K562 (cell line): ENCODE measurements at regions of chr12 and their contacts with region 1.

Region 1: GRCh38 chr12:125402874-125403789 is 337.9 kb downstream of the AACS start:
- DNase-seq: peak; percentile 30 to 58 (median 50)
- ATAC-seq: peak; percentile 86
- H3K4me3 ChIP-seq: no peak overlapping the region
- H3K27ac ChIP-seq: no peak overlapping the region
- H3K4me1 ChIP-seq: no peaks in the 10 kb centered on the region
- H3K27me3 ChIP-seq: no peaks in the 10 kb centered on the region
- CTCF ChIP-seq: peak; percentile 60 to 79 (median 65)
- EP300 ChIP-seq: no peak
- POLR2A ChIP-seq: no peak
- RAD21 ChIP-seq: peak; percentile 52 to 81

Region 2: GRCh38 chr12:125183187-125184067 is 219.7 kb before region 1 on chr12:
- CTCF ChIA-PET with region 1: interaction called, 10 read pairs
- POLR2A ChIA-PET with region 1: no interaction called
- in situ Hi-C with region 1: no loop called
- intact Hi-C with region 1: loop called (anchors 1 kb)
- DNase-seq: peak; percentile 85 to 92 (median 90)
- ATAC-seq: peak; percentile 85
- H3K4me3 ChIP-seq: no peak overlapping the region
- H3K27ac ChIP-seq: no peak overlapping the region
- H3K4me1 ChIP-seq: peaks cover 0 to 24% of the 10 kb centered on the region in 2 experiments; a peak in 3 of 5 replicates
- H3K27me3 ChIP-seq: peaks cover 11 to 41% of the 10 kb centered on the region in 2 experiments; a peak in 4 of 5 replicates
- CTCF ChIP-seq: peak; percentile 95 to 97 (median 96)
- EP300 ChIP-seq: no peak
- POLR2A ChIP-seq: no peak
- RAD21 ChIP-seq: peak; percentile 79 to 95

Region 3: GRCh38 chr12:125240717-125241116 is 162.4 kb before region 1 on chr12:
- CTCF ChIA-PET with region 1: interaction called, 6 read pairs
- POLR2A ChIA-PET with region 1: no interaction called
- in situ Hi-C with region 1: no loop called
- intact Hi-C with region 1: loop called (anchors 1 kb)
- DNase-seq: no peak
- ATAC-seq: no peak
- H3K4me3 ChIP-seq: no peak overlapping the region
- H3K27ac ChIP-seq: no peak overlapping the region
- H3K4me1 ChIP-seq: no peaks in the 10 kb centered on the region
- H3K27me3 ChIP-seq: peaks cover 9 to 44% of the 10 kb centered on the region in 2 experiments; a peak in 4 of 5 replicates
- CTCF ChIP-seq: no peak
- EP300 ChIP-seq: no peak
- POLR2A ChIP-seq: no peak
- RAD21 ChIP-seq: no peak

Region 4: DNA sequence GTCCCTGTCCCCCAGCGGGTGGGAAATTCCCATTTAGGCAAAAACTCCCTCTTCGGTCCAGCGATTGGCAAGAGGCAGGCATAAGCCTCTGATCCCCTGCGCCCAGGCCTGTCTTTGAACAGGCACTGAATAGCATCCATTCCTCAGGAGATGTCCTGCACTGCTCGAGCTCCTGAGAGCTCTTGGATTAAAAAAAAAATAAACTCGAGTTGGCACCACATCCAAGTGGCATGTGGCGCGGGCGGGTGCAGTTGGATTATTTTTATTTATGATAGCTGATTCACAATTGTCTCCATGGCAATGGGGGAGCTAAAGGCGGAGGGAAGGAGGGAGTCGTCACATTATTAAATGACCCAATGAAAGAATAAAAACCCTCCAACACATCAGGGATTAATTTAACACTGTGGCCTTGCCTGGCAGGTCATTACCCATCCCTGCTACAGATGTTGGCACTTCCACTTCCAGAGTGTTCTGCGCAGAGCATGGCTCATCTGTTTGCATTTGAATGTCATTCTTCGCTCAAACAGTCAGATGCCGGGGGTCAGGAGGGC is 130.7 kb before region 1 on chr12:
- CTCF ChIA-PET with region 1: no interaction called
- POLR2A ChIA-PET with region 1: no interaction called
- in situ Hi-C with region 1: no loop called
- intact Hi-C with region 1: no loop called
- DNase-seq: no peak
- ATAC-seq: no peak
- H3K4me3 ChIP-seq: no peak overlapping the region
- H3K27ac ChIP-seq: no peak overlapping the region
- H3K4me1 ChIP-seq: no peaks in the 10 kb centered on the region
- H3K27me3 ChIP-seq: peaks cover 6 to 14% of the 10 kb centered on the region in 2 experiments; a peak in 4 of 5 replicates
- CTCF ChIP-seq: no peak
- EP300 ChIP-seq: no peak
- POLR2A ChIP-seq: no peak
- RAD21 ChIP-seq: no peak

Region 5: GRCh38 chr12:125330645-125331341 is 72.3 kb before region 1 on chr12:
- CTCF ChIA-PET with region 1: interaction called, 15 read pairs
- POLR2A ChIA-PET with region 1: interaction called, 3 read pairs
- in situ Hi-C with region 1: no loop called
- intact Hi-C with region 1: loop called (anchors 1 kb)
- DNase-seq: peak; percentile 64 to 90 (median 86)
- ATAC-seq: peak; percentile 100
- H3K4me3 ChIP-seq: peak overlapping the region; percentile 11; the same call in 1 of the 2 replicates
- H3K27ac ChIP-seq: no peak overlapping the region
- H3K4me1 ChIP-seq: peaks cover 0 to 6% of the 10 kb centered on the region in 2 experiments; a peak in 2 of 5 replicates
- H3K27me3 ChIP-seq: peaks cover 0 to 14% of the 10 kb centered on the region in 2 experiments; a peak in 2 of 5 replicates
- CTCF ChIP-seq: peak; percentile 79 to 89 (median 82)
- EP300 ChIP-seq: no peak
- POLR2A ChIP-seq: no peak
- RAD21 ChIP-seq: peak; percentile 68 to 76

Region 6: GRCh38 chr12:126233625-126234024 is 830.5 kb after region 1 on chr12:
- CTCF ChIA-PET with region 1: no interaction called
- POLR2A ChIA-PET with region 1: no interaction called
- in situ Hi-C with region 1: no loop called
- intact Hi-C with region 1: no loop called
- DNase-seq: no peak
- ATAC-seq: no peak
- H3K4me3 ChIP-seq: no peak overlapping the region
- H3K27ac ChIP-seq: no peak overlapping the region
- H3K4me1 ChIP-seq: no peaks in the 10 kb centered on the region
- H3K27me3 ChIP-seq: no peaks in the 10 kb centered on the region
- CTCF ChIP-seq: no peak
- EP300 ChIP-seq: no peak
- POLR2A ChIP-seq: no peak
- RAD21 ChIP-seq: no peak